Activated T-helper 1 cell treated with anti-CD3 and anti-CD28 coated beads, Interleukin-12 subunit alpha, Interleukin-12 subunit beta, Interleukin-2, Interleukin-4 antibody, amounts not matched to agents 30 ng/mL and 10 ng/mL and 1 ng/mL, durations not matched to agents 14 hours and 24 hours and 36 hours (primary cell): ENCODE measurements at regions of chr17 and their contacts with region 1.

Region 1: GRCh38 chr17:49361902-49362722 is at the start of gene ZNF652:
- DNase-seq: peak; percentile 94
- H3K4me3 Mint-ChIP-seq: peak within 1 kb of the TSS; percentile 88
- H3K27ac Mint-ChIP-seq: peak within 1 kb of the TSS; percentile 89
- H3K4me1 Mint-ChIP-seq: peaks cover 62% of the 10 kb centered on the region
- H3K27me3 Mint-ChIP-seq: no peaks in the 10 kb centered on the region
- total RNA-seq, gene ZNF652: 6.3 and 7.5 TPM in 2 replicates

Region 2: GRCh38 chr17:48915459-48916282 is 446.4 kb before region 1 on chr17:
- intact Hi-C with region 1: loop called (anchors 10 kb)
- DNase-seq: peak; percentile 68
- H3K4me3 Mint-ChIP-seq: peak overlapping the region; percentile 70
- H3K27ac Mint-ChIP-seq: peak overlapping the region; percentile 88
- H3K4me1 Mint-ChIP-seq: peaks cover 55% of the 10 kb centered on the region
- H3K27me3 Mint-ChIP-seq: no peaks in the 10 kb centered on the region

Region 3: GRCh38 chr17:49249292-49249794 is 112.8 kb before region 1 on chr17:
- intact Hi-C with region 1: no loop called
- DNase-seq: no peak
- H3K4me3 Mint-ChIP-seq: no peak overlapping the region
- H3K27ac Mint-ChIP-seq: no peak overlapping the region
- H3K4me1 Mint-ChIP-seq: no peaks in the 10 kb centered on the region
- H3K27me3 Mint-ChIP-seq: peaks cover 11% of the 10 kb centered on the region

Region 4: DNA sequence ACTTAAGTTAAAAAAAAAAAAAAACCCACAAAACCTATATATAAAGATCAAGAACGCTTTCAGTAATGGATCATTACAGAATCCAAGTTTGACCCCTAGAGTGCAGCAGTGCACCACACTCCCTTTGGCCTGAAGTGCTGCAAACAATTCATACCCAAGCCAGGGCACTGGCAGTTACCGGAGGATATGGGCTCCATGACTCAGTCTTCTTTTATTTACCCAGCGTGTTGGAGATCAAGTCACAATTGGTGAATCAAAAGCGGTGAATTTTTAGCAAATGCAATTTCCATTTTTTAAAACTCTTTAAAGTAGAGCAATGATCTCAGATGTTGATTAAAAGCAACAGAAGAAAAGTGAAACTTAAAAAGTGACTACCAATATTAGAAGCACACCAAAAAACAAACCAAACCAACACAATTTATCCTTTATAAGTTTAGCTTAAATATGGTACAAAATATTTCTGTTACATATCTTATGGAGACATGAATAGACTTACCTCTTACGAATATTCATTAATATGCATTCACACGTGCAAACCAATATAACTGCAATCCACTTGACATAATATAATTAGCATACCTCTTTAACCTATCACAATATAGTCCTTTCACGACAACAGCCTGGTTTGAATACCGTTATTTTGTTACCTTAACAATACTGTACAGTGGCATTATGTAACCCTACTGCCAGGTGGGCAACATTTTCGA is 46.4 kb before region 1 on chr17:
- intact Hi-C with region 1: loop called (anchors 2 kb)
- DNase-seq: peak; percentile 63
- H3K4me3 Mint-ChIP-seq: peak overlapping the region; percentile 69
- H3K27ac Mint-ChIP-seq: peak overlapping the region; percentile 70
- H3K4me1 Mint-ChIP-seq: peaks cover 30% of the 10 kb centered on the region
- H3K27me3 Mint-ChIP-seq: no peaks in the 10 kb centered on the region

Region 5: DNA sequence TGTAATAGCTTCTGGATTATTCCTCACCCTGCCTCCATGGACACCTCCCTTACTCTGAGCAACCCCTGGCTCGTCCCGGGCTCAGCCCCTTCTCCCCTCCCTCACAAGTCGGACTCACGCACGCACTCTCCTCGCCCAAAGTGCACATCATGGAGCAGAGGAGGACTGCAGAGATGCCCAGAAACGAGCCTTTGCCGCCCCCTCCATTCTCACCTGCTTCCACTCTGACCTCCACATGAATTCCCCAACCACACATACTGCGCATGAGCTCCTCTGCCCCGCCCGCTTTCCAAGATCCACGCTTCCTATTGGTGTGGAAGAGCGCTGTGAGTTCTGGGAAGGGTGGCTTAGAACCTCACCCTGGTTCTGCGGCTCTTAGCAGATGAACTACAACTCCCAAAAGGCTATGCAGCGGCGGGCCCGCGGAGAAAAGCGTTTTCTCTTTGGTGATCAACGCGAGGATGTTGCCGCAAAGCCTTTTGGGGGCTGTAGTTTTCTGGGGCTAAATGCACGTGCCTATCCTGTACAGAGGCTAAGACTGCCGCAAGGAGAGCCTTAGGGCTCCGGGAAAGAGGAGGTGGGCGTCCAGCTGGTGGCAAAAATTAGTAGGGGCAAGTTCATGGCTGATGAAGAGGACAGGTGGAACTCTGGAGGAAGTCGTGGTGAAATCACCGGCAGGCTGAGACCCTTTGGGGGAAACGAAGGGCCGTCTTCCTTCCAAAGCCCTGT is 52.7 kb after region 1 on chr17 and contains the start of gene PHB1:
- intact Hi-C with region 1: loop called (anchors 1 kb)
- DNase-seq: peak; percentile 93
- H3K4me3 Mint-ChIP-seq: peak within 1 kb of the TSS; percentile 98
- H3K27ac Mint-ChIP-seq: peak within 1 kb of the TSS; percentile 95
- H3K4me1 Mint-ChIP-seq: peaks cover 9% of the 10 kb centered on the region
- H3K27me3 Mint-ChIP-seq: peaks cover 3% of the 10 kb centered on the region
- total RNA-seq, gene PHB1: 395 and 401 TPM in 2 replicates

Region 6: DNA sequence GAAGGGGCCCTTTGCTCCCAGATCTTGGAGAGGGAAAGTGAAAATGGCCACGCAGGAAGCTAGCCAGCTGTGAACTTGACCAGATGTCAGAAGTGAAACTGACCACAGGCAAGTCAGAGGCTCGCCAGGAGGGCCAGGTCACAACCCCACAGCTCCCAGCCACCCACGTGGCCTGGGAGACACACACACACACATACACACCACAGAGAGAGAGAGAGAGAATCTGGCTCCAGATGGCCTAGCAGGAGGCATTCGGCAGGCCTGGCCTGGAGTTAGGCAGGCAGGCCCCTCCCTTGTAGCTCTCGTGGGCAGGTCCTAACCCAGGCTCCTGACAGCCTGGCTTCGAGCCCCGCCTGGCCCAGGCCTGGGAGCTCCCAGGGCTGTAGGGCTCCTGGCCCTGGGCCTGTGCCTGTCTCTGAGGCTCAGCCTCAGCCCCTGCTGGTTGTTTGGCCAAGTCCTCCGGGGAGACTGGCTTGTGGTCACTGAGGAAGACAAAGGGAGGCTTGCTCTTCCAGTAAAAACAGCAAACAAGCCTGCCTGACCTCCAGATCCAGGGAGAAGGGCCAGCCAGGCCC is 153.2 kb after region 1 on chr17:
- intact Hi-C with region 1: no loop called
- DNase-seq: no peak
- H3K4me3 Mint-ChIP-seq: no peak overlapping the region
- H3K27ac Mint-ChIP-seq: no peak overlapping the region
- H3K4me1 Mint-ChIP-seq: no peaks in the 10 kb centered on the region
- H3K27me3 Mint-ChIP-seq: peaks cover 8% of the 10 kb centered on the region